Gastrocnemius medialis (tissue), 4 donors: ENCODE measurements at regions of chr1 and their contacts with region 1.

Region 1: GRCh38 chr1:99662581-99663208 is 16.8 kb downstream of the PALMD start:
- DNase-seq: peak; percentile 79 to 87
- ATAC-seq: peak; percentile 81
- H3K4me3 ChIP-seq: no peak overlapping the region
- H3K27ac ChIP-seq: peak overlapping the region; percentile 88 to 97 (median 90)
- H3K4me1 ChIP-seq: peaks cover 64 to 83% of the 10 kb centered on the region in 2 donors
- H3K27me3 ChIP-seq: no peaks in the 10 kb centered on the region
- CTCF ChIP-seq: no peak
- POLR2A ChIP-seq: peak in 1 of 2 donors; percentile 22

Region 2: DNA sequence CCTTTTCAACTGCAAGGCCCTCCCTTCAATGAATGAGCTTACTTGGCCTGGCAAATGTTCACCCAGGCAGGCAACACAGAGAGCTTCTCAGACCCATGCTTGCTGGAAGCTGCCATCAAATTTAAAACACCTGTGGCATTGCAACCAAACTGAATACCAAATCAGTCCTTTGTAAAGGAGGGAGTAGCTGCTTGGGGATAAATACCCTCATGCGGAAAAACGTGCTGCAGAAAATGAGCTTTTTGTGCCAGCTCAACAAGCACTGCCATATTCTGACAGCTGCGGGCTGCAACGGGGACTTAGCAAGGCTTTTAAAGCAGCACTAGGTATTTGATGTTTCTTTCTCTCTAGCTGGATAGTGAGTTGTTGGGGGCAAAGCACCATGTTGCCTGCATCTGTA is 278.7 kb before region 1 on chr1:
- in situ Hi-C with region 1: no loop called
- intact Hi-C with region 1: no loop called
- DNase-seq: no peak
- ATAC-seq: no peak
- H3K4me3 ChIP-seq: no peak overlapping the region
- H3K27ac ChIP-seq: no peak overlapping the region
- H3K4me1 ChIP-seq: no peaks in the 10 kb centered on the region
- H3K27me3 ChIP-seq: no peaks in the 10 kb centered on the region
- CTCF ChIP-seq: no peak
- POLR2A ChIP-seq: no peak

Region 3: GRCh38 chr1:99685516-99686180 is 23.0 kb after region 1 on chr1:
- in situ Hi-C with region 1: no loop called
- intact Hi-C with region 1: loop called (anchors 2 kb)
- DNase-seq: peak; percentile 93 to 99
- ATAC-seq: peak; percentile 95 to 96
- H3K4me3 ChIP-seq: no peak overlapping the region
- H3K27ac ChIP-seq: peak overlapping the region; percentile 79 to 97 (median 90)
- H3K4me1 ChIP-seq: peaks cover 50 to 55% of the 10 kb centered on the region in 2 donors
- H3K27me3 ChIP-seq: no peaks in the 10 kb centered on the region
- CTCF ChIP-seq: peak; percentile 18 to 73 (median 64)
- POLR2A ChIP-seq: no peak

Region 4: DNA sequence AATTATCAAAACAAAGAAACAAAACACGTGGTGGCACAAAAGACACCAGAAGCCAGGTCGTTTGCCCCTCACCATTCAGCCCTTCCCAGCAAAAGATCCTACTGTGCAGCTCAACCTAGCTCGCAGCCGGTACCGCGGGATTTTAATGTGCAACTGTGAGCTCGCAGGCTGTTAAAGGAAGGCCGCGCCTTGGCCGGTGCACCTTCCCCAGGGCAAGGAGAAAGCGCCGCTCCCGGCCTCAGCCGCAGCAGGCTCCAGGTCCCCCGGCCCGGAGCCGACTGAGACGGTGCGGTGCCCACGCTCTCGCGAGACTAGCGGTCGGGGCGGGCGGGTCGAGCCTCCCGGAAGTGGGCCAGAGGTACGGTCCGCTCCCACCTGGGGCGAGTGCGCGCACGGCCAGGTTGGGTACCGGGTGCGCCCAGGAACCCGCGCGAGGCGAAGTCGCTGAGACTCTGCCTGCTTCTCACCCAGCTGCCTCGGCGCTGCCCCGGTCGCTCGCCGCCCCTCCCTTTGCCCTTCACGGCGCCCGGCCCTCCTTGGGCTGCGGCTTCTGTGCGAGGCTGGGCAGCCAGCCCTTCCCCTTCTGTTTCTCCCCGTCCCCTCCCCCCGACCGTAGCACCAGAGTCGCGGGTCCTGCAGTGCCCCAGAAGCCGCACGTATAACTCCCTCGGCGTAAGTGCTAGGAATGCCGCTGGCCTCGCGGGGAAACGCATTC is 187.2 kb after region 1 on chr1 and contains the start of gene AGL:
- in situ Hi-C with region 1: no loop called
- intact Hi-C with region 1: loop called (anchors 10 kb)
- DNase-seq: peak; percentile 82 to 91
- ATAC-seq: peak; percentile 81 to 85
- H3K4me3 ChIP-seq: peak within 1 kb of the TSS; percentile 79 to 89 (median 86)
- H3K27ac ChIP-seq: peak within 1 kb of the TSS; percentile 94 to 95 (median 94)
- H3K4me1 ChIP-seq: peaks cover 51 to 55% of the 10 kb centered on the region in 2 donors
- H3K27me3 ChIP-seq: no peaks in the 10 kb centered on the region
- CTCF ChIP-seq: no peak
- POLR2A ChIP-seq: peak; percentile 87 to 89
- total RNA-seq, gene AGL: 49.3 to 143 (median 103) TPM